ENCODE measurements at regions of chr6 and their contacts with region 1.

Region 1: DNA sequence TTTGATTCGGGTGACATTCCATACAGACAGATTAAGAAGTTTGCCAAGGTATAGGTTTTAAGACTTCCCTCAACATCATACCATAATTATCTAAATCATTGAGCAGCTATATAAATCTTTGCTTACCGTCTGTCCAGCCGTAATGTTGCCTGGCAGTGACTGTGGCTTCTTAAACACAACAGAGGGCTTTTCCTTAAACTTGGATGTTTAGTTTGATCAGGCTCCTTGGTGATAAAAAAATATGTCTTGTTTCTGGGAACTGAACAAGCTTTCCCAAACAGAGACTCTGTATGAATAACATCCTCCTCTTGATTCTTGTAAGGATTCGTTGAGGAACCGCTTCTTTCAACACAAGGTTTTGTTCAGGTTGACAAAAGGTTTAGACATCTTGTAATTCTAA is 130.9 kb downstream of the QKI start:
- DNase-seq: no peak
- ATAC-seq: no peak
- H3K4me3 ChIP-seq: no peak overlapping the region
- H3K27ac ChIP-seq: peak overlapping the region in 1 of 10 donors; percentile 19
- H3K4me1 ChIP-seq: peaks cover 0 to 100% (median 71%) of the 10 kb centered on the region in 9 donors
- H3K27me3 ChIP-seq: no peaks in the 10 kb centered on the region
- CTCF ChIP-seq: no peak

Region 2: GRCh38 chr6:163513570-163514166 is 31.7 kb before region 1 on chr6:
- intact Hi-C with region 1: loop called in 1 of 10 experiments (anchors 1 kb)
- DNase-seq: no peak
- ATAC-seq: peak in 6 of 8 donors; percentile 25 to 77 (median 56)
- H3K4me3 ChIP-seq: no peak overlapping the region
- H3K27ac ChIP-seq: peak overlapping the region in 2 of 10 donors; percentile 7 to 22
- H3K4me1 ChIP-seq: peaks cover 0 to 76% (median 48%) of the 10 kb centered on the region in 9 donors
- H3K27me3 ChIP-seq: no peaks in the 10 kb centered on the region
- CTCF ChIP-seq: no peak